Activated B cell treated with CpG ODN at 0.5 μM for 24 hours (primary cell): ENCODE measurements at regions of chr9 and their contacts with region 1.

Region 1: DNA sequence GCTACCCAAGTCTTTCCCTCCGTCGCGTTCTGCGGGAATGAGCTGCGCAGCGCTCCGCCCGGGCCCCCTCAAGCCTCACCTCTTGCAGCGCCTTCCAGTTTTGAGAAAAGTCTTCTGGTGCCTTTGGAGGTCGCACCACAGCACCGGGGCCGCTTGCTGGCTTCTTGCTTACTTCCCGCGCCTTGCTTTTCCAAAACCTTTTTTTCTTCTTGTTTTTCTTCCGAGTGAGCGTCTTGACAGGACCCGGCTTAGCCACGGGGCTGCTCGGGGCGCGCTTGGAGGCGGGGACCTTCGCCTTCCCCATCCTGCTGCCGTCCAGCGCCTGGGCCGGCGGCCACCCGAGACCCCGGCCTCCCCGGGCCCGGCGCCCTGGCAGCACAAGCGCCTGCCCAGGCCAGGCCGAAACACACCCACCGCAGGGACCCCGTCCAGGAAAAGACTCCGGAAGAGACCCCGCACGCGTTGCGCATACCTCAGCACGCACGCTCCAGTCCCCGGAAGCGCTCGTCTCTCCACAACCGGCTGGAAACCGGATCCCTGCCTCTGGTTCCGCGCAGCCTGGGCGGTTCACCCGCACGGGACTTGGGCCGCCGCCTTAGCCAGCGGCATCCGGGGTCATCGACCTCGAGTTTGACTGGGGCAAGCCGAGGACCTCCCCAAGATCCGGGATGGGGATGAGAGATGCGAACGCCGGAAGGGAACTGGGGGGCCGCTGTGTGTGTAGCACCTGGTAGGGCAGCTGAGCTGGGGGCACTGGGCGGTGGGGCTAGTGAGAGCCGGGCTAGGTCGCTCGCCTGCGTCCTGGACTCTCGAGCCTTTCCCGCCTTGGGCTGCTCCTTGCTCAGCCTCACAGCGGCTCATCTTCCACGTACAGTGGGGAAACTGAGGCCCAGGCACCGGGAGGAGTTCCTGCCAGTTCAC is at the start of gene REXO4:
- DNase-seq: peak; percentile 86
- ATAC-seq: peak; percentile 84
- H3K4me3 Mint-ChIP-seq: peak within 1 kb of the TSS; percentile 90
- H3K27ac Mint-ChIP-seq: peak within 1 kb of the TSS; percentile 91
- H3K4me1 Mint-ChIP-seq: peaks cover 71% of the 10 kb centered on the region
- H3K27me3 Mint-ChIP-seq: no peaks in the 10 kb centered on the region
- CTCF ChIP-seq: no peak
- total RNA-seq, gene REXO4: 31.6 and 33.3 TPM in 2 replicates

Region 2: GRCh38 chr9:133368249-133368881 is 49.4 kb before region 1 on chr9:
- CTCF ChIA-PET with region 1: no interaction called
- POLR2A ChIA-PET with region 1: no interaction called
- intact Hi-C with region 1: no loop called
- DNase-seq: no peak
- ATAC-seq: no peak
- H3K4me3 Mint-ChIP-seq: no peak overlapping the region
- H3K27ac Mint-ChIP-seq: no peak overlapping the region
- H3K4me1 Mint-ChIP-seq: peaks cover 49% of the 10 kb centered on the region
- H3K27me3 Mint-ChIP-seq: no peaks in the 10 kb centered on the region
- CTCF ChIP-seq: no peak

Region 3: GRCh38 chr9:133440874-133441273 is 23.1 kb after region 1 on chr9:
- CTCF ChIA-PET with region 1: no interaction called
- POLR2A ChIA-PET with region 1: interaction called, 4 read pairs
- intact Hi-C with region 1: loop called (anchors 2 kb)
- DNase-seq: peak; percentile 34
- ATAC-seq: peak; percentile 98
- H3K4me3 Mint-ChIP-seq: no peak overlapping the region
- H3K27ac Mint-ChIP-seq: peak overlapping the region; percentile 92
- H3K4me1 Mint-ChIP-seq: peaks cover 30% of the 10 kb centered on the region
- H3K27me3 Mint-ChIP-seq: no peaks in the 10 kb centered on the region
- CTCF ChIP-seq: no peak